CD8-positive, alpha-beta memory T cell (primary cell): ENCODE measurements at regions of chr16 and their contacts with region 1.

Region 1: DNA sequence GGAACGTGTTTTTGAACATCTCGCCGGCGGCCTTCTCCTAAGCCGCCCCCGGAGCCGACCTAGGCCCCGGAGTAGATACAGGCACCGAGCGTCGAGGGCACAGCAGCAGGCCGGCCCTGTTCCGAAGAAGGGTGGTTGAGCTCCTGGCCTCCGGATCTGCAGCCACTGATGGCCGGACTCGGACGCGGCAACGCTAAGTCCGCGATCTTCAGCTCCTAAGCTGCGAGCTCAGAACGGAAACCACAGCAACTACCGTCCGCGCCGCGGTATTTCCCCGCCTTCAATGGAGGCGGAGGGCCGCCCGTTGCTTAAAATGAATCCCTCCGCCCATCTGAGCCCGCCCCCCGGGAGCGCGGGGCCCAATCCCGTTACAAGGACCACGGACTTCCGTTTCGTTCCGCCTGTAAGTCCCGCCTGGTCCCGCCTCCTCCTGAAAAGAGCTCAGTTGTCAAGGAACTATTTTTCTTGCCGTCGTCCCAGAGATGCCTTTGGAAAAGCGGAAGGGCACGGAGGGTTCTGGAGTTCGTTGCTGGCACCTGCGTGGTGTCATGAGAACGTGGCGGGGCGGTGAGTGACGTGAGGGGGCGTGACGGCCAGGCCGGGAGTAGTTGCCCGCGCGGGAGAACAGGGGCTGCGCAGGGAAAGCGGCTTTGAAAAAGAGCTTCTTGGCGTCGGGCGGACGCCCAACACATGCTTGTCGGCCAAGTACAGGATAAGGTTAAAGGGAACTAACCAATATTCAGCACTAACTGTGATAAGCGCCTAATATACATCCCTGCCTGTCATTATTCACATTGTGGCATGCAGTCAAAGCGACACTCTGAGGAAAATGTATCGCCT is at the start of gene CFAP20:
- DNase-seq: peak; percentile 92 to 98 (median 95)
- H3K4me3 ChIP-seq: peak within 1 kb of the TSS; percentile 94
- H3K4me3 Mint-ChIP-seq: peak within 1 kb of the TSS; percentile 87 to 99 (median 97)
- H3K27ac ChIP-seq: peak within 1 kb of the TSS; percentile 92
- H3K27ac Mint-ChIP-seq: peak within 1 kb of the TSS; percentile 74 to 99 (median 96)
- H3K4me1 ChIP-seq: peaks cover 29% of the 10 kb centered on the region
- H3K4me1 Mint-ChIP-seq: peaks cover 45 to 49% (median 45%) of the 10 kb centered on the region in 3 donors
- H3K27me3 ChIP-seq: no peaks in the 10 kb centered on the region
- H3K27me3 Mint-ChIP-seq: peaks cover 0 to 4% of the 10 kb centered on the region in 2 donors
- total RNA-seq, gene CFAP20: 56.7 to 57.2 TPM

Region 2: GRCh38 chr16:58025351-58026138 is 103.8 kb before region 1 on chr16 and contains the start of gene MMP15:
- CTCF ChIA-PET with region 1: interaction called, 12 read pairs
- POLR2A ChIA-PET with region 1: interaction called, 10 read pairs
- DNase-seq: peak; percentile 39 to 76 (median 54)
- H3K4me3 ChIP-seq: peak within 1 kb of the TSS; percentile 66
- H3K4me3 Mint-ChIP-seq: peak within 1 kb of the TSS; percentile 89 to 94 (median 93)
- H3K27ac ChIP-seq: no peak within 1 kb of the TSS
- H3K27ac Mint-ChIP-seq: peak within 1 kb of the TSS in 6 of 8 donors; percentile 82 to 89 (median 88)
- H3K4me1 ChIP-seq: peaks cover 10% of the 10 kb centered on the region
- H3K4me1 Mint-ChIP-seq: peaks cover 11 to 19% (median 14%) of the 10 kb centered on the region in 3 donors
- H3K27me3 ChIP-seq: no peaks in the 10 kb centered on the region
- H3K27me3 Mint-ChIP-seq: peaks cover 0 to 6% of the 10 kb centered on the region in 2 donors
- total RNA-seq, gene MMP15: 0.97 to 1.1 TPM